ENCODE measurements at regions of chr6 and their contacts with region 1.

Region 1: DNA sequence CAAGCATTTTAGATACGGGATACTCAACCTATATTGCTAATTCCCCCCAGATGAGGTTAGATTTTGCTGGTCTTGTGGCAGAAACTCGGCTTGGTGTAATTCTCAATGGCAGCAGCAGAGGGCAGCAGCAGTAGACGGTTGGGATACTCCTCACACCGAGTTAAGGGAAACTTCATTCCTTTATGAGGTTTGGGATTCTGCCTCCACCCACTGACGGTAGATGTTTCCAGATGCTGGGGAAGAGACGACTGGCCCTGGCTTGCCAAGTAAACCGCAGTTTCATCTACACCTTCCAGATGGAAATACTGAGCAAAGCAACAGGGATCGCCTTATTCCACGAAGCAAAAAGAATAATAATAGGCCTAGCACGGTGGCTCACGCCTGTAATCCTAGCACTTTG is 8.2 kb upstream of the TBC1D7 start:
- DNase-seq: no peak
- H3K4me3 ChIP-seq: no peak overlapping the region
- H3K27ac ChIP-seq: peak overlapping the region in 1 of 4 donors; percentile 18
- H3K4me1 ChIP-seq: peaks cover 0 to 14% (median 0%) of the 10 kb centered on the region in 3 donors
- H3K27me3 ChIP-seq: no peaks in the 10 kb centered on the region
- CTCF ChIP-seq: peak; percentile 81 to 97 (median 93)
- POLR2A ChIP-seq: no peak

Region 2: DNA sequence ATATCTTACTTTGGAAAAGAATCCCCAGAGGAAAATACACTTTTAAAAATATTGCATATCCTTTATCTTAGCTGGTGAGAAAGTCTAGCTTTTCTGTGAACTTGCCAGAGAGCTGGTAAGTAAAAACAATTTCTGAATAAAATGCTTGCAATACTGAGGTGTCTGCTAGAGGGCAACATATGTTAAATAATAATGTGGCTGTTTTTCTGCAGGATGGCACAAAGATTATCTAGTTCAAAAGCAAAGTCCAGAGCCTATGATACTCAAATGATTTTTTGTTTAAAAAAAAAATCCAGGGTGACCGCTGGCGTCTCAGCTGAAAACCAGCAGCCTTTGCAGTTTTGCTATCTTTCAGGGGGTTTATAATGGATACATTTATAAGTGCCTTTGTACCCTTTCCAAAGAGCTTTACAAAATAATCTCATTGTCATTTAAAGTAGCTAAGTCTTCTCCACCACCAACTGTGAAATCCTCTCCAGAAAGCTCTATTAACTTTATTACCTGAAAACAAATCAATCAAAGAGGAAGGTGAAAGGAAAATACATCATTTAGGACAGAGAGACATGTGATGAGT is 425.1 kb before region 1 on chr6:
- intact Hi-C with region 1: loop called (anchors 5 kb)
- DNase-seq: no peak
- H3K4me3 ChIP-seq: no peak overlapping the region
- H3K27ac ChIP-seq: no peak overlapping the region
- H3K4me1 ChIP-seq: no peaks in the 10 kb centered on the region
- H3K27me3 ChIP-seq: no peaks in the 10 kb centered on the region
- CTCF ChIP-seq: peak in 5 of 6 experiments; percentile 35 to 66 (median 47)
- POLR2A ChIP-seq: no peak

Region 3: DNA sequence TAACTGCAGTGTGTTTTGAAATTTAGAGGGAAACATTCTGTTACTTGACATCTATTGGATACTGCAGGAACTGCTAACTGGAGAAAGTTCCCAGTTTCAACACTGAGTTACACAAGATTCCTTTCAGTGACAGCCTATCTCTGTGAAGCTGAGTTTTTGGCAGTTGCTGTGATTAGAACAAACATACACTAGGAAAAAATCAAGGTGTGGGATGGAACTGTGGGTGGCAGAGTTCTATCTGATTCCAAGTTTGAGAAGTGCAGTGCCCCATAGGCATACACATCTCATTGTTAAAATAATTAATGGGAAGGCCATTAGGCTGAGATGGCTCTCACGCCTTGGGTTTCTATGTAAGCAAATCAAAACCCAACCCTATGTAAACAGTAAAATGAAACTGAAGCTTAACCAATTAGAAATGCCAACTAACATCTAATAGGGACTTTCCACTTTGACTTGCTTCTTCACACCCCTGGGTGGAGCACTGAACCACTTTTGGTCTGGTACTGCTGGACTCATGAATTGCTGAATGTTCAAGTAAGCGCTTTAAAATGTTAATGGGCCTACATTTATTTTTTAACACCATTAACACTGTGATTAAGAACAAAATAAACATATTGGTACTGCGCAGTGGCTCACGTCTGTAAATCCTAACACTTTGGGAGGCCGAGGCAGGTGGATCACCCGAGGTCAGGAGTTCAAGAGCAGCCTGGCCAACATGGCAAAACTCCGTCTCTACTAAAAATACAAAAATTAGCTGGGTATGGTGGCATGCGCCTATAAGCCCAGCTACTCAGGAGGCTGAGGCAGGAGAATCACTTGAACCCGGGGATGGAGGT is 47.0 kb after region 1 on chr6:
- intact Hi-C with region 1: no loop called
- DNase-seq: no peak
- H3K4me3 ChIP-seq: peak overlapping the region in 1 of 4 donors; percentile 3
- H3K27ac ChIP-seq: peak overlapping the region; percentile 67 to 80 (median 70)
- H3K4me1 ChIP-seq: peaks cover 5 to 67% (median 30%) of the 10 kb centered on the region in 3 donors
- H3K27me3 ChIP-seq: no peaks in the 10 kb centered on the region
- CTCF ChIP-seq: peak in 3 of 6 experiments; percentile 4 to 53 (median 46)
- POLR2A ChIP-seq: no peak

Region 4: DNA sequence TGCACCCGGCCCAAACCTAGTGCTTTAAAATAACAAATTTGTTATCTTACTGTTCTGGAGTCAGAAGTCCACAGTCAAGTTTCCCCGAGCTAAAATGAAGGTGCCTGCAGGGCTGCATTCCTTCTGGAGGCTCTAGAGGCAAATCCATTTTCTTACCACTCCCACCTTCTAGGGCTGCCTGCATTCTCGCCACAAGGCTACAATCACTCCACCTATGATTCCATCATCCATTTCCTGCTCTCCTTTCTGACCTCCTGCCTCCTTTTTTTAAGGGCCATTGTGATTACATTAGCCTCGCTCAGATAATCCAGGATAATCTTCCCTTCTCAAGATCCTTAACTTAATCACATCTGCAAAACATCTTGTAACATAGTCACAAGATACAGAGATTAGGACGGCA is 195.4 kb after region 1 on chr6:
- intact Hi-C with region 1: loop called (anchors 5 kb)
- DNase-seq: no peak
- H3K4me3 ChIP-seq: no peak overlapping the region
- H3K27ac ChIP-seq: no peak overlapping the region
- H3K4me1 ChIP-seq: peaks cover 0 to 8% (median 7%) of the 10 kb centered on the region in 3 donors
- H3K27me3 ChIP-seq: no peaks in the 10 kb centered on the region
- CTCF ChIP-seq: no peak
- POLR2A ChIP-seq: no peak